Activated CD4-positive, alpha-beta T cell treated with anti-CD3 and anti-CD28 coated beads for 36 hours (primary cell): ENCODE measurements at regions of chr9 and their contacts with region 1.

Region 1: DNA sequence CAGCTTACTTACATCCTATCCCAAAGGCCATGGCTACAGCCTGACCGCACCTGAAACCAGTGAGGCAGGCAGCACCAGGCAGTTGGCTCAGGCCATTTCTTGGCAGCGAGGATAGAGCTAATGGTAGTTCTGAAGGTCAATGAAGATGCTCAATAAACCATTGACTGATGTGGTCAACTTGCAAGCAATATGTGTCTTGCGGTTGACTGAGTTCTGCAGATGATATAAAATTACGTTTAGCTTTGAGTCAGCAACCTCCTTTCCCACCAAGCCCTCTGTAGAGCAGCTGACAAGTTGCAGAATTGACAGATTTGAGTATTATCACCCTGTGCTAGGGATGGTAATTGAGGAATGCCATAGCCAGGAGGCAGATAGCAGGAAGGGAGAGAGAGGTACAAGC is 189.0 kb upstream of the PUM3 start:
- DNase-seq: no peak
- ATAC-seq: no peak
- H3K4me3 Mint-ChIP-seq: no peak overlapping the region
- H3K27ac Mint-ChIP-seq: no peak overlapping the region
- H3K4me1 Mint-ChIP-seq: no peaks in the 10 kb centered on the region
- H3K27me3 Mint-ChIP-seq: peaks cover 11% of the 10 kb centered on the region

Region 2: DNA sequence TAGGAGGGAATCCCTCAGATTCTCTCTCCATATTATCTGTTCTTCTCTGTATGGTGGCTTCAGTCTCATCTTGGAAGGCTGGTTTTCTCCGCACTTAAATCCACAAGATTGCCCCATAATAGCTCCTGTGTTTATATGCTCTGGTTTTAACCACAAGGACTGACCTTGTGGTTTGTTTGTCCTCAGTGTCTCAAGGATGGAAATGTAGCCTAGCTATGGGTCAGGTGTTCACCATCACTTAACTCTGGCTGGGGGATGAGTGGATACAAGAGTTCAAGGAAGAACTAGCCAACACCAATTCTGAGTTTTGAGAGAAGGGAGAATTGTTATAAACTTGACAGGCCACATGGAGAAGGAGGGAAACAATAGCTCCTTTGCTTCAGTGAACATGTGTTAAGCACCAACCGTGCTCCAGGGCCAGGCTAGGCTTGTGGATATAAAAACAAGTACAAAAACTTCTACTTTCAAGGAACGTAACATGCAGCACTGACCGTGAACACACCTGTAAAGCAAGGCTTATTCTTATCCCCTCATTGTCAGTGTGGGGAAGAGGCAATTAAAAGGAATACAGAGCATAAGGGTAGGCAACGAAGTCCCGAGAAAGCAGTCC is 486.9 kb before region 1 on chr9:
- CTCF ChIA-PET with region 1: no interaction called
- POLR2A ChIA-PET with region 1: no interaction called
- intact Hi-C with region 1: no loop called
- DNase-seq: no peak
- ATAC-seq: no peak
- H3K4me3 Mint-ChIP-seq: no peak overlapping the region
- H3K27ac Mint-ChIP-seq: no peak overlapping the region
- H3K4me1 Mint-ChIP-seq: no peaks in the 10 kb centered on the region
- H3K27me3 Mint-ChIP-seq: peaks cover 4% of the 10 kb centered on the region

Region 3: DNA sequence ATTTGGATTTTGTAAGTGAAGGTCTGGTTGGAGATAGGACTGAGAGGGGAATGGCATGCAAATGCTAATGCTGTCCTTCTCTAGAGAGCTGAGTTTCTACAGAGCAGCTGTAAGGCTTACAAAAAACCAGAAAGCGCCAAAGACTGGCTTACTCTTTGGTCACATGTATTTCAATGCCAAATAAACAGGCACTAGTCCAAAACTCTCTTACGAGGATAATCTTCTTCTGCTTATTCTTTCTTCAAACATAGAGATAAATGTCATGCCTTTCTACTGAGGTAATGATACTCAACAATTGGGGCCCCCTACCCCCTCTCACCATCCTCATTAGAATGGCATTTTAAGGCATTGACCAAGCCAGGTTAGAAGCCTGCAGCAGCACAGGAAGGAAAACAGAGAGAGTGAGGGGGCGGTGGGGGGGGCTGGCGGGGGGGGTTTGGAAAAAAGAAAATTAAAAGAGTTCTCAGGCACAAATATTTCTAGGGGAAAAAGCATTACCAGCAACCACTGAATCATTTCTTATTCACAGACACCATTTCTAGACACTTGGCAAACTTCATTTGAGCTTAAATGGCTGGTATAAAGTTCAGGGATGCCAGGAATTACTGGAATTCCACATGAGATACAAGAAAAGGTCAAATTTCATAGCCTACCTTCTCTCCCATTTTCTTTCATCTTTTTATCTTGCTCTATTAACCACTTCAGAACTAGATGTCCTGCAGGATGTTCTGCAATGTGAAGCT is 223.0 kb before region 1 on chr9:
- CTCF ChIA-PET with region 1: no interaction called
- POLR2A ChIA-PET with region 1: no interaction called
- intact Hi-C with region 1: no loop called
- DNase-seq: no peak
- ATAC-seq: no peak
- H3K4me3 Mint-ChIP-seq: no peak overlapping the region
- H3K27ac Mint-ChIP-seq: no peak overlapping the region
- H3K4me1 Mint-ChIP-seq: no peaks in the 10 kb centered on the region
- H3K27me3 Mint-ChIP-seq: no peaks in the 10 kb centered on the region

Region 4: DNA sequence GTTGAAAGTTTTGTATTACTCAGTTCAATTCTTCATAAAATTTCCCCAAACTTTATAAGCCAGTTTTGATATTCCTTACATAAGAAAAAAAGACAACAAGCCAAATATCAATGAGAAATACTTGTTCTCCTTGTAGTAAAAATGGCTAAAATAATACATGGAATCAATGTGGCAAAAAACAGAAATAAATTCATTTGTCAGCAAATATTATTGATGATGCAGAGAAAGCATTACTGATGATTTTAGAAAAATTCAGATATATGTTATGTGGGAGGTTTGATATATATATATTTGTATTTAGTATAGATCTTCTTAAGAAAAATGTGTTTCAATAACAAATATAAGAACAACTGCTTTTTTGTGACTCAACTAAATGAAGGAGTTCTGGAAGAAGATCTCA is 62.0 kb before region 1 on chr9:
- CTCF ChIA-PET with region 1: no interaction called
- POLR2A ChIA-PET with region 1: no interaction called
- intact Hi-C with region 1: no loop called
- DNase-seq: no peak
- ATAC-seq: no peak
- H3K4me3 Mint-ChIP-seq: no peak overlapping the region
- H3K27ac Mint-ChIP-seq: no peak overlapping the region
- H3K4me1 Mint-ChIP-seq: no peaks in the 10 kb centered on the region
- H3K27me3 Mint-ChIP-seq: peaks cover 7% of the 10 kb centered on the region

Region 5: GRCh38 chr9:3498691-3499090 is 465.8 kb after region 1 on chr9:
- CTCF ChIA-PET with region 1: no interaction called
- POLR2A ChIA-PET with region 1: no interaction called
- intact Hi-C with region 1: loop called in 1 of 2 experiments (anchors 5 kb)
- DNase-seq: no peak
- ATAC-seq: no peak
- H3K4me3 Mint-ChIP-seq: no peak overlapping the region
- H3K27ac Mint-ChIP-seq: no peak overlapping the region
- H3K4me1 Mint-ChIP-seq: peaks cover 31% of the 10 kb centered on the region
- H3K27me3 Mint-ChIP-seq: no peaks in the 10 kb centered on the region